Natural killer cell (primary cell): ENCODE measurements at regions of chr15 and their contacts with region 1.

Region 1: DNA sequence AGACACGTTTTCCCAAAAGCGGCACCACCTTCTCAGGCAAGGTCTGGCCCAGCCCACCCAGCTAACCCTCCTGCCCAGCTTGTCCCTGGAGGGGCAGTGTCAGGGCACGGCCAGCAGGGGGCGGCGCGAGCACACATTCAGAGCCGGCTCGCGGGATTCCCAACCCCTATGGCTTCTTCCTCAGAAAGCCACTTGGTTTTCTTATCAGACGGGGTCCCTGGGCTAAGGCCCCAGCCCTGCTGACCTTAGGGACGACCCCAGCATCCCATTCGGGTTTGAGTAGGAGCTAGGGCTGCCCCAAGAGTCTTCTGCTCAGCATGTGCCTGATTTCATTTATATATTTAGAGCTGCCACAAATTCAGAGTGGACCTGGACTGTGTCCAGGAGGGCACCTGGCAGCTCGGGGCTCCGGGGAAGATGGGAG is 14.5 kb downstream of the RLBP1 start:
- DNase-seq: peak; percentile 69 to 81
- ATAC-seq: peak; percentile 77 to 81 (median 77)
- H3K4me3 ChIP-seq: no peak overlapping the region
- H3K4me3 Mint-ChIP-seq: peak overlapping the region; percentile 13
- H3K27ac ChIP-seq: no peak overlapping the region
- H3K27ac Mint-ChIP-seq: peak overlapping the region in 1 of 2 donors; percentile 49
- H3K4me1 ChIP-seq: peaks cover 43% of the 10 kb centered on the region
- H3K4me1 Mint-ChIP-seq: peaks cover 27 to 40% of the 10 kb centered on the region in 2 donors
- H3K27me3 ChIP-seq: no peaks in the 10 kb centered on the region
- H3K27me3 Mint-ChIP-seq: no peaks in the 10 kb centered on the region
- CTCF ChIP-seq: peak; percentile 99

Region 2: GRCh38 chr15:89195836-89196235 is 11.1 kb before region 1 on chr15:
- intact Hi-C with region 1: no loop called
- DNase-seq: no peak
- ATAC-seq: no peak
- H3K4me3 ChIP-seq: no peak overlapping the region
- H3K4me3 Mint-ChIP-seq: no peak overlapping the region
- H3K27ac ChIP-seq: no peak overlapping the region
- H3K27ac Mint-ChIP-seq: peak overlapping the region in 1 of 2 donors; percentile 44
- H3K4me1 ChIP-seq: no peaks in the 10 kb centered on the region
- H3K4me1 Mint-ChIP-seq: peaks cover 0 to 9% of the 10 kb centered on the region in 2 donors
- H3K27me3 ChIP-seq: no peaks in the 10 kb centered on the region
- H3K27me3 Mint-ChIP-seq: no peaks in the 10 kb centered on the region
- CTCF ChIP-seq: no peak

Region 3: DNA sequence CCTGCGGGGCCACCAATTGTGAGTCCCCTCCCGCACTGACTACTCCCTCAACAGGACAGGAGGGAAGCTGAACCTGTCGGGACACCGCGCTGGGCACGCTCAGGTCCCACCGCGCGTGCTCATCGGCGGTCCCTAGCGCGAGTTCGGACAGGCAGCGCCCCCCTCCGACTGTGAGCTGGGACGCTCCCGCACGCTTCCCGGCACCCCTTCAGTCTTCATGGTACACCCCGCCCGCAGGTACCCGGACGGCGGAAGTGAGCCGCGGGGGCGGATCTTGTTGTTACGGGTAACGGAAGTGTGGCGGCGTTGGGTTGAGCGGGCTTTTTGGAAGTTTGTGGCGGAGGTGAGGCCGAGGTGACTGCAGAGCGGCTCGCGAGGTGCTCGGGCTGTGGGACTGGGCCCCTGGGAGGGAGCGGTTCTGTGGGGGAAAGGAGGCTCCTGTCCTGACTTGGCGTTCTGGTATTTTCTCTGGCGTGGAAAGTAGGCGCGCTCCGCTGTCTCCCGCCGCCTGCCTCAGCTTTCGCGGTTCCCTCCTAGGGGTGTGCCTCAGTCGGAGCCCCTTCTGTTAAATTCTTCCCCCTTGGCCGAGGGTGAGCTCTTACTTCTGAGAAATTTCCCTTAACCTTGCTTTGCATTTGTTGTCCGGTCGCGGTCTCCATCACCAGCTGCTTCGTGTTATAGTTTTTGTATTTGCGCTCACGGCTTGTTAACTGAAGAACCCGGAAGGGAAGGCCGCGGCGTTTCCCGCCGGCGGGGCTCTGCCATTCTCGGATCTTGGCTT is 37.0 kb after region 1 on chr15 and contains the start of gene FANCI:
- intact Hi-C with region 1: loop called (anchors 2 kb)
- DNase-seq: peak; percentile 95 to 96
- ATAC-seq: peak; percentile 97 to 98 (median 98)
- H3K4me3 ChIP-seq: peak within 1 kb of the TSS; percentile 67
- H3K4me3 Mint-ChIP-seq: peak within 1 kb of the TSS; percentile 91
- H3K27ac ChIP-seq: peak within 1 kb of the TSS; percentile 11
- H3K27ac Mint-ChIP-seq: peak within 1 kb of the TSS; percentile 86 to 90
- H3K4me1 ChIP-seq: peaks cover 13% of the 10 kb centered on the region
- H3K4me1 Mint-ChIP-seq: peaks cover 20 to 37% of the 10 kb centered on the region in 2 donors
- H3K27me3 ChIP-seq: no peaks in the 10 kb centered on the region
- H3K27me3 Mint-ChIP-seq: no peaks in the 10 kb centered on the region
- CTCF ChIP-seq: peak; percentile 24
- total RNA-seq, gene FANCI: 22.3 to 27.9 (median 22.7) TPM